Aorta (tissue), 5 donors: ENCODE measurements at regions of chr7 and their contacts with region 1.

Region 1: DNA sequence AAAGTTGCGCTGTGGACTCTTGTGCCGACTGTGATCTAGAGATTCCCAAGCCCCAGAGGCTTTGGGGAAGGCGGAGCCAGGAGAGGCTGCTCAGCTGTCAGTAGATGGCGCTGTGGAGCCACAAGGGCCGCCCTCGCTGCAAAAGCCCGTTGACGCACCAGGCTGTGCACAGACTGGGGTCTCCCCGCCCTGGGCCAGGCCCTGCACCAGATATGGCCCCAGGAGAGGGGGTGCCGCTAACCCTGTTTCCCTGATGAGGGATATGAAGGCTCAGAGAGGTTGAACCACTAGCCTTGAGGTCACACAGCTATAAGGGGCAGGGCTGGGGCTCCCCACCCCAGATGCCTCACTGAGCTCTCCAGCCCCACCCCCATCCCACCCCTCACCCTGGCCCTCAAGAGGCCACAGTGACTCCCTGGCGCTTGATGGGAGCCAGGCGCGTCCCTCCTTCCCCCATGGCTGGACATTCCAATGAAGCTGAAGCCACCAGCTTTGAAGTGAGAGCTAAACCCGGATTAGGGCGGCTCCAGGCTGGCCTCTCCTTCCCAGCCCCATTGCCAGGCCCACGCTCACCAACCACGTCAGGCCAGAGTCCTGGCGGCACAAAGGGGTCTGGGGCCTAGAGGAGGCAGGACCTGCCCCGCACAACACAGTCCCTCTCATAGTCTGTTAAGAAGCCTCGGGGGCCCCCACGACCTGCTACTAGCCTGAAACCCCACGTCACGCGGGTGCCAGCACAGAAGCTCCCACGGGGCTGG is 26.4 kb downstream of the MYL10 start:
- DNase-seq: peak; percentile 90 to 94
- ATAC-seq: peak; percentile 87
- H3K4me3 ChIP-seq: no peak overlapping the region
- H3K27ac ChIP-seq: no peak overlapping the region
- H3K4me1 ChIP-seq: no peaks in the 10 kb centered on the region
- H3K27me3 ChIP-seq: no peaks in the 10 kb centered on the region

Region 2: GRCh38 chr7:101420436-101420835 is 182.2 kb before region 1 on chr7:
- intact Hi-C with region 1: no loop called
- DNase-seq: no peak
- ATAC-seq: no peak
- H3K4me3 ChIP-seq: no peak overlapping the region
- H3K27ac ChIP-seq: no peak overlapping the region
- H3K4me1 ChIP-seq: no peaks in the 10 kb centered on the region
- H3K27me3 ChIP-seq: no peaks in the 10 kb centered on the region

Region 3: GRCh38 chr7:101681170-101682007 is 78.7 kb after region 1 on chr7:
- intact Hi-C with region 1: loop called in 1 of 2 experiments (anchors 2 kb)
- DNase-seq: peak; percentile 90 to 94
- ATAC-seq: peak; percentile 93
- H3K4me3 ChIP-seq: no peak overlapping the region
- H3K27ac ChIP-seq: no peak overlapping the region
- H3K4me1 ChIP-seq: no peaks in the 10 kb centered on the region
- H3K27me3 ChIP-seq: no peaks in the 10 kb centered on the region

Region 4: GRCh38 chr7:102236592-102237287 is 634.1 kb after region 1 on chr7:
- intact Hi-C with region 1: loop called (anchors 10 kb)
- DNase-seq: peak; percentile 61 to 82
- ATAC-seq: peak; percentile 79
- H3K4me3 ChIP-seq: no peak overlapping the region
- H3K27ac ChIP-seq: no peak overlapping the region
- H3K4me1 ChIP-seq: no peaks in the 10 kb centered on the region
- H3K27me3 ChIP-seq: no peaks in the 10 kb centered on the region

Region 5: GRCh38 chr7:102279537-102280400 is 677.1 kb after region 1 on chr7:
- intact Hi-C with region 1: loop called (anchors 5 to 10 kb)
- DNase-seq: no peak
- ATAC-seq: peak; percentile 75
- H3K4me3 ChIP-seq: no peak overlapping the region
- H3K27ac ChIP-seq: no peak overlapping the region
- H3K4me1 ChIP-seq: no peaks in the 10 kb centered on the region
- H3K27me3 ChIP-seq: no peaks in the 10 kb centered on the region